ENCODE measurements at regions of chr14 and their contacts with region 1.

Region 1: GRCh38 chr14:39368261-39368959 is 63.8 kb downstream of the FBXO33 start:
- DNase-seq: peak; percentile 19 to 48
- ATAC-seq: peak; percentile 52 to 86 (median 80)
- H3K4me3 ChIP-seq: no peak overlapping the region
- H3K27ac ChIP-seq: no peak overlapping the region
- H3K4me1 ChIP-seq: peaks cover 0 to 15% (median 8%) of the 10 kb centered on the region in 9 donors
- H3K27me3 ChIP-seq: no peaks in the 10 kb centered on the region
- CTCF ChIP-seq: peak in 8 of 9 donors; percentile 31 to 70 (median 56)

Region 2: DNA sequence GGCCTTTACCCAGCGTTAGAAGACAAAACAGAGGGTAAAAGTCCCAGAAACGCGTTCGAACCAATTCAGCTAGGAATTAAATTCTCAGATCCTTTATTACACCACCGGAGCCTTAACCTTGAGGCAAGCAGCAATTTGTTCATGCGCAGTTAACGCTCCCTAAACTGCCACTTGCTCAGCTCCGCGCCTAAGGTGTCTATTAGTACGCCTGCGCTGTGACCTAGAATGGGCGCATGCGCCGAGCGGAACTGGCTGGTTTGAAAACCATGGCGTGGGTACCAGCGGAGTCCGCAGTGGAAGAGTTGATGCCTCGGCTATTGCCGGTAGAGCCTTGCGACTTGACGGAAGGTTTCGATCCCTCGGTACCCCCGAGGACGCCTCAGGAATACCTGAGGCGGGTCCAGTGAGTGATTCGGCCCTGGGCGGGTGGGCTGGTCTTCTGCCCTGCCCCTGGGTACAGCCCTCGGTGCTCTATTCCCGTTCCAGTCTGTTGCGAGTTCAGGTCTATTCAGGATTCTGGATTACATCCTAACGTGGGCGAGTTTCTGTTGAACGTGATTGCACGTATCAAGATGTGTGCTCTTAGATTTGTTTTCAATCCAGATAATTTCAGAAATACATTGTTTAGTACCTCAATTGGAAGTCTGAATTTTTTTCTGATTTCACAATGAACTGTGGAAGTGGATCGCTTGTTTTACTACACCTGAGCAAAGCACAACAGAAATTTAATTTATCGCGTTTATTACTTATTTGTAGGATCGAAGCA is 254.2 kb before region 1 on chr14 and contains the start of gene GEMIN2:
- intact Hi-C with region 1: loop called in 4 of 10 experiments (anchors 5 to 10 kb)
- DNase-seq: peak; percentile 92 to 93
- ATAC-seq: peak; percentile 99 to 100 (median 100)
- H3K4me3 ChIP-seq: peak within 1 kb of the TSS; percentile 57 to 91 (median 74)
- H3K27ac ChIP-seq: peak within 1 kb of the TSS in 9 of 10 donors; percentile 51 to 87 (median 77)
- H3K4me1 ChIP-seq: peaks cover 0 to 19% (median 13%) of the 10 kb centered on the region in 9 donors
- H3K27me3 ChIP-seq: no peaks in the 10 kb centered on the region
- CTCF ChIP-seq: no peak
- total RNA-seq, gene GEMIN2: 5.6 to 9.7 (median 7.9) TPM

Region 3: GRCh38 chr14:39169541-39169900 is 198.9 kb before region 1 on chr14:
- intact Hi-C with region 1: loop called in 2 of 10 experiments (anchors 5 to 10 kb)
- DNase-seq: no peak
- ATAC-seq: peak in 6 of 8 donors; percentile 38 to 60 (median 52)
- H3K4me3 ChIP-seq: peak overlapping the region; percentile 64 to 98 (median 84)
- H3K27ac ChIP-seq: peak overlapping the region; percentile 86 to 99 (median 96)
- H3K4me1 ChIP-seq: peaks cover 0 to 46% (median 35%) of the 10 kb centered on the region in 9 donors
- H3K27me3 ChIP-seq: no peaks in the 10 kb centered on the region
- CTCF ChIP-seq: no peak

Region 4: DNA sequence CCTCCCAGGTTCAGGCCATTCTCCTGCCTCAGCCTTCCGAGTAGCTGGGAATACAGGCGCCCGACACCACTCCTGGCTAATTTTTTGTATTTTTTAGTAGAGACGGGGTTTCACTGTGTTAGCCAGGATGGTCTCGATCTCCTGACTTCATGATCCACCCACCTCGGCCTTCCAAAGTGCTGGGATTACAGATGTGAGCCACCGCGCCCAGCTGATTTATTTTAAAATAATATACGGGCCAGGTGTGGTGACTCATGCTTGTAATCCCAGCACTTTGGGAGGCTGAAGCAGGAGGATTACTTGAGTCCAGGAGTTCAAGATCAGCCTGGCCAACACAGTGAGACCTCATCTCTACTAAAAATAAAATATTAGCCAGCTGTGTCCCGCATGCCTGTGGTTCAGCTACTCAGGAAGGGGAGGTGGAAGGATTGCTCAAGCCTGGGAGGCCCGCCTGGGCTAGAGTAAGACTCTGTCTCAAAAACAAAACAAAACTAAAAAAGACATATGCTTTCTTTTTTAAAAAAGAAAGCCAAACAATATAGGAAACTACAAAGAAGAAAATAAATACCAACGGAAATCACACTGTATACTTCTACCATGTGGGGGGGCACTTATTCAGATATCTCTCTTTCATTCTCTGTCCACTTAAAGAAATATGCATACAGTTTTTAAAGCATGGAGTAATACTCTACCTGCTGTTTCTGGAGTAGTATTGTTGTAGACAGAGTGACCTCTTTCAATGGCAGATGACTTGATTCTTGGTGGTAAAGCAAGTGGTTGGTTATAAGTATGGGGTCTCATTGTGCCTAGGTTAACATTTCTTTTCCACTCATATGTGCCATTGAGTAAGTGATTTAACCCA is 135.6 kb before region 1 on chr14:
- intact Hi-C with region 1: loop called in 1 of 10 experiments (anchors 5 kb)
- DNase-seq: no peak
- ATAC-seq: no peak
- H3K4me3 ChIP-seq: no peak overlapping the region
- H3K27ac ChIP-seq: peak overlapping the region in 1 of 10 donors; percentile 62
- H3K4me1 ChIP-seq: peaks cover 0 to 40% (median 0%) of the 10 kb centered on the region in 9 donors
- H3K27me3 ChIP-seq: no peaks in the 10 kb centered on the region
- CTCF ChIP-seq: no peak

Region 5: GRCh38 chr14:39491134-39491571 is 122.7 kb after region 1 on chr14:
- intact Hi-C with region 1: no loop called
- DNase-seq: no peak
- ATAC-seq: peak in 1 of 8 donors; percentile 38
- H3K4me3 ChIP-seq: no peak overlapping the region
- H3K27ac ChIP-seq: peak overlapping the region in 1 of 10 donors; percentile 15
- H3K4me1 ChIP-seq: peaks cover 0 to 16% (median 8%) of the 10 kb centered on the region in 9 donors
- H3K27me3 ChIP-seq: no peaks in the 10 kb centered on the region
- CTCF ChIP-seq: peak; percentile 32 to 73 (median 58)

Measured in heart right ventricle (tissue), 16 donors.